ENCODE measurements at regions of chr2 and their contacts with region 1.

Region 1: DNA sequence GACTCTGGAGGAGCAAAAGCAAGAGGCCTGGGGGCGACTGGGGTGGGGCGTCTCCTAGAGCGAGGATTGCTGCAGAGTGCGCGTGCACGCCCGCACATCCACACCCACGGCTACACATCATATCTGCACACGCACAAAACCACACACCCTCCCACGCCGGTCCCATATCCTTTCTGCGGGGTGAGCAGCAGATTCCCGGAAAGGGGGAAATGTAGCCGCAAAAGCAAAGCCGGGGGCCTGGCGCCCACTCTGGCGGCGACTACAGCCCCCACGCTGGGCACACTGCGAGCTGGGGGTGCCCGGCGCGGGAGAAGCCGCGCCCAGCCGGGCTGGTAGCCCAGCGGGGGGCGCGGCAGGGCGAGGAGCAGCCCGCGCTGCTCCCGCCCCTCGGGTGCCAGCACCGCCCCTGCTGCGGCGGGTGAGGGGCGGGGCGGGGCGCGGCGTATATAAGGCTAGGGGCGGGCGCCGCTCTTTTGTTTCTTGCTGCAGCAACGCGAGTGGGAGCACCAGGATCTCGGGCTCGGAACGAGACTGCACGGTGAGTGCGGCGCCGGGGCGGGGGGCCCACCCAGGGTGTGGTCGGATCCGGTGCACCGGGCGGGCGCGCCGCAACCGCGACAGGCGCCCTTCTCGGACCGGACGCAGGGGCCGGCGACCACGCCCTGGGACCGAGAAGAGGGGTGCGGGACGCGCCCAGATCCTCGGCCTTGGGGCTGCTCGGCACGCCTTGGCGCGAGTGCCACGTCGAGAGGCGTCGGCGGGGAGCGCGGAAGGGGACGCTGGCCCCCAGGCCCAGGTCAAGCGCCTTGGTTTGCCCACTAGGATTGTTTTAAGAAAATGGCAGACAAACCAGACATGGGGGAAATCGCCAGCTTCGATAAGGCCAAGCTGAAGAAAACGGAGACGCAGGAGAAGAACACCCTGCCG is at the start of gene TMSB10:
- DNase-seq: peak; percentile 91
- ATAC-seq: peak; percentile 72
- H3K4me3 Mint-ChIP-seq: peak within 1 kb of the TSS; percentile 98
- H3K27ac Mint-ChIP-seq: peak within 1 kb of the TSS; percentile 96
- H3K4me1 Mint-ChIP-seq: peaks cover 59% of the 10 kb centered on the region
- H3K27me3 Mint-ChIP-seq: no peaks in the 10 kb centered on the region
- CTCF ChIP-seq: no peak
- total RNA-seq, gene TMSB10: 2,035 to 2,060 TPM

Region 2: GRCh38 chr2:84870306-84870705 is 35.1 kb before region 1 on chr2:
- CTCF ChIA-PET with region 1: no interaction called
- POLR2A ChIA-PET with region 1: interaction called, 14 read pairs
- intact Hi-C with region 1: no loop called
- DNase-seq: no peak
- ATAC-seq: no peak
- H3K4me3 Mint-ChIP-seq: no peak overlapping the region
- H3K27ac Mint-ChIP-seq: peak overlapping the region; percentile 37
- H3K4me1 Mint-ChIP-seq: peaks cover 77% of the 10 kb centered on the region
- H3K27me3 Mint-ChIP-seq: no peaks in the 10 kb centered on the region
- CTCF ChIP-seq: no peak

Region 3: GRCh38 chr2:84888401-84889276 is 16.8 kb before region 1 on chr2:
- CTCF ChIA-PET with region 1: interaction called, 11 read pairs
- POLR2A ChIA-PET with region 1: interaction called, 55 read pairs
- intact Hi-C with region 1: loop called (anchors 2 kb)
- DNase-seq: peak; percentile 79
- ATAC-seq: peak; percentile 93
- H3K4me3 Mint-ChIP-seq: peak overlapping the region; percentile 68
- H3K27ac Mint-ChIP-seq: peak overlapping the region; percentile 92
- H3K4me1 Mint-ChIP-seq: peaks cover 60% of the 10 kb centered on the region
- H3K27me3 Mint-ChIP-seq: no peaks in the 10 kb centered on the region
- CTCF ChIP-seq: no peak

Region 4: DNA sequence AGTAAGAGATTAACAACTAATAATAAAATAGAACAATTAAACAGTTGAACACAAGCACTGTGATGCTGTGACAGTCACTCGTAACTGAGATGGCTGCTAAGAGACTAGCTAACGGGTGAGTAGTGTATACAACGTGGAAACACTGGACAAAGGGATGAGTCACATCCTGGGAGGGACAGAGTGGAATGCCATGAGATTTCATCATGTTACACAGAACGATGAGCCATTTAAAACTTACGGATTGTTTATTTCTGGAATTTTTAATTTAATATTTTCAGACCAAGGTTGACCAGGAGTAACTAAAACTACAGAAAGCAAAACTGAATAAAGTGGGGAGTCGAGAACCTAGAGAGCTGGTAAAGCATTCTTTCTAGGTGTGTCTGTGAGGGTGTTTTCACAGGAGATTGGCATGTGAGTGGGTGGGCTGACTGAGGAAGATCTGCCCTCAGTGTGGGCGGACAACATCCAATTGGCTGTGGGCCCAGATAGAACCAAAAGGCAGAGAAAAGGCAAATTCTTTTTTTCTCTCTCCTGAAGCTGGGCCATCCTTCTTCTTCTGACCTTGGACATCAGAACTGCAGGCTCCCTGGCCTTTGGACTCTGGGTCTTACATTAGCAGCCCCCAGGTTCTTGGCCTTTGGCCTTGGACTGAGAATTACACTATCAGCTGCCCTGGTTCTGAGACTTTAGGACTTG is 14.6 kb after region 1 on chr2:
- CTCF ChIA-PET with region 1: interaction called, 60 read pairs
- POLR2A ChIA-PET with region 1: interaction called, 170 read pairs
- intact Hi-C with region 1: loop called (anchors 2 kb)
- DNase-seq: peak; percentile 85
- ATAC-seq: peak; percentile 82
- H3K4me3 Mint-ChIP-seq: peak overlapping the region; percentile 69
- H3K27ac Mint-ChIP-seq: peak overlapping the region; percentile 96
- H3K4me1 Mint-ChIP-seq: peaks cover 50% of the 10 kb centered on the region
- H3K27me3 Mint-ChIP-seq: no peaks in the 10 kb centered on the region
- CTCF ChIP-seq: no peak